Right ventricle myocardium inferior (tissue), 1 donor: ENCODE measurements at regions of chr22 and their contacts with region 1.

Region 1: DNA sequence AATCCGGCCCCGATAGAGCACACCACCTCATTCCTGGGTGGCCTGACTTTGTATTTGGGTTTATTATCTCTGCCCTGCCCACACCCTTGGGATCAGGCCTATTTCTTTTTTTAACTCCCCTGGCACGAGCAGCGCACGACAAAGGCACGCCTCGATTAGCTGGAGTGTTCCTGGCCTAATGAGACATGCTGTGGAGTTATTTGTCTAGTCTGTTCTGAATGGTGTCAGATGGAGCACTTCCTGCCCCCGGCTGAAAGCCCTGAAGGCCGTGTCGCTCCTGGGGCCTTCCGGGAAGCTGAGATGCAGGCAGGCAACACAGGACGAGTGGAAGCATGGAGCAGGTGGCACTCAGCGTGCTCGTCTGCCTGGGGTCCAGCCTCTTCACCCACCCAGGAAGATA is 47.1 kb downstream of the LARGE1 start:
- DNase-seq: no peak
- ATAC-seq: peak; percentile 84

Region 2: GRCh38 chr22:33832558-33833151 is 40.5 kb before region 1 on chr22:
- intact Hi-C with region 1: loop called (anchors 5 kb)
- DNase-seq: peak; percentile 71
- ATAC-seq: peak; percentile 69

Region 3: DNA sequence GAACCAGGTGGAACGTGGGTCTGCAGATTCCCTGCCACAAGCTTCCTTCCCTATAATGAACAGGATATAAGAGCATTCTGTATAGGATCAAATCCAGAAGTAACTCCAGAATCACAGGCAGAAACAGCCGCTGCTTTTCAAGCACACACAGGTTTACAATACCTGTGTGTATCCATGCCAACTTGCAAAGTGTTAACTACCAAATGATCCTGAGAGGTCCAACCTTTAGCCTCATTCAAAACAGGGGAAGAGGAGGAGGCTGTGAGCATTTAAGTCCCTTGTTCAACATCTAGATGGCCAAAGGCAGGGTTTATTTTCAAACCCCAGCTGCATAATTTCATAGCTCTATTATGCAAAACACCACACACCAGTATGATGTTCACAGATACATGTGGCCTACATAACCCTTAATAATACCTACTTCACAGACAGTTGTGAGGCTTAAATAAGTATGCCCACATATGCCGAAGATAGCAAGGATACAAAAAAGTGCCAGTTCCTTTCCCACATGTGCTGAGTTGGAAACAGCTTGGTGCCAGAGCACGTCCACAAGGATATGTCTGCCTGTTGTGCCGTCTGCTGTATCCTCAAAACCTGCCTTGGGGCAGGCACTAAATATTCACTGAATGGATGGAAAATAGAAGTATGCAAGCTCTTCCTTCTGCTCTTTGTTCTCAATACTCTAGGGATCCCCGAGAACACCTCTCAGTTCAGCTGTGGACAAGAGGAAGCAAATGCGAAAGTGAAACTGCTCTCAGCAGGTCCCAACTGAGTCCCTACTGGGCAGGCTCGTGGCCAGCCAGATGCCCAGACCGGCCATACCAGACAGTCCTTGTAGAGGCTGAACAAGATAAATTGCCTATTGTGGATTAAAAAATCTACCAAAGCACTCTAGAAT is 19.7 kb before region 1 on chr22:
- intact Hi-C with region 1: no loop called
- DNase-seq: peak; percentile 71
- ATAC-seq: peak; percentile 92